ENCODE measurements at regions of chr3 and their contacts with region 1.

Region 1: DNA sequence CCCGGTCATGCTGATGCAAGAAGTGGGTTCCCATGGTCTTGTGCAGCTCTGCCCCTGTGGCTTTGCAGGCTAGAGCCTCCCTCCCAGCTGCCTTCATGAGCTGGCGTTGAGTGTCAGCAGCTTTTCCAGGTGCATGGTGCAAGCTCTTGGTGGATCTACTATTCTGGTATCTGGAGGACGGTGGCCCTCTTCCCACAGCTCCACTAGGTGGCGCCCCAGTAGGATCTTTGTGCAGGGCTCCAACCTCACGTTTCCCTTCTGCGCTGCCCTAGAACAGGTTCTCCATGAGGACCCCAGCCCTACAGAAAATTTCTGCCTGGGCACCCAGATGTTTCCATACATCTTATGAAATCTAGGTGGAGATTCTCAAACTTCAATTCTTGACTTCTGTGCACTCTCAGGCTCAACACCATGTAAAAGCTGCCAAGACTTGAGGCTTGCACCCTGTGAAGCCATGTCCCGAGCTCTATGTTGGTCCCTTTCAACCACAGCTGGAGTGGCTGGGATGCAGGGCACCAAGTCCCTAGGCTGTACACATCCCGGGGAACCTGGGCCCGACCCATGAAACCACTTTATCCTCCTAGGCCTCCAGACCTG is 238.4 kb upstream of the MDFIC2 start:
- DNase-seq: peak; percentile 72
- ATAC-seq: peak; percentile 45
- H3K4me3 ChIP-seq: no peak overlapping the region
- H3K4me3 Mint-ChIP-seq: no peak overlapping the region
- H3K27ac ChIP-seq: no peak overlapping the region
- H3K27ac Mint-ChIP-seq: no peak overlapping the region
- H3K4me1 ChIP-seq: no peaks in the 10 kb centered on the region
- H3K4me1 Mint-ChIP-seq: no peaks in the 10 kb centered on the region
- H3K27me3 ChIP-seq: no peaks in the 10 kb centered on the region
- H3K27me3 Mint-ChIP-seq: no peaks in the 10 kb centered on the region
- CTCF ChIP-seq: peak; percentile 76

Region 2: DNA sequence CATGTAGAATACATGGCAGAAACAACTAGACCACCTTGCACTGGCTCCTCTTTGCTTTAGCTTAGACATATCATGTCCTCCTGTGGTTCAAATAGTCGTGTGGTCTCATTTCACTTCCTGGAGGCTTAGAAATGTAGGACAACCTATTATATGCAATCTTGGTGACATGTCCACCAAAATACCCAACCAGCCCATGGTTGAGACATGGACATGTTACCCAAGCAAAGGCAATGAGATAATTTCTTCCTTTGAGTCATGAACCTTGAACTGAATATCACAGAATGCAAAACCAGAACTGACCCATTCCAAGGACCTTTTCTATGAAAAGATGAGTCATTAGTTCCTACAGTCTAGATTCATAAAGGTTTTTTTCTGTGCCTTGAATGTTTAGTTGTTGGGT is 70.6 kb after region 1 on chr3:
- CTCF ChIA-PET with region 1: no interaction called
- POLR2A ChIA-PET with region 1: no interaction called
- intact Hi-C with region 1: no loop called
- DNase-seq: no peak
- ATAC-seq: no peak
- H3K4me3 ChIP-seq: no peak overlapping the region
- H3K4me3 Mint-ChIP-seq: no peak overlapping the region
- H3K27ac ChIP-seq: no peak overlapping the region
- H3K27ac Mint-ChIP-seq: no peak overlapping the region
- H3K4me1 ChIP-seq: no peaks in the 10 kb centered on the region
- H3K4me1 Mint-ChIP-seq: no peaks in the 10 kb centered on the region
- H3K27me3 ChIP-seq: no peaks in the 10 kb centered on the region
- H3K27me3 Mint-ChIP-seq: peaks cover 21% of the 10 kb centered on the region
- CTCF ChIP-seq: no peak

Region 3: GRCh38 chr3:71069797-71070196 is 519.0 kb after region 1 on chr3:
- CTCF ChIA-PET with region 1: interaction called, 5 read pairs
- POLR2A ChIA-PET with region 1: no interaction called
- intact Hi-C with region 1: loop called (anchors 10 kb)
- DNase-seq: peak; percentile 83
- ATAC-seq: peak; percentile 48
- H3K4me3 ChIP-seq: no peak overlapping the region
- H3K4me3 Mint-ChIP-seq: peak overlapping the region; percentile 69
- H3K27ac ChIP-seq: peak overlapping the region; percentile 25 to 77
- H3K27ac Mint-ChIP-seq: peak overlapping the region; percentile 84
- H3K4me1 ChIP-seq: peaks cover 55 to 67% of the 10 kb centered on the region in 2 donors
- H3K4me1 Mint-ChIP-seq: peaks cover 79% of the 10 kb centered on the region
- H3K27me3 ChIP-seq: no peaks in the 10 kb centered on the region
- H3K27me3 Mint-ChIP-seq: no peaks in the 10 kb centered on the region
- CTCF ChIP-seq: peak; percentile 78

Region 4: GRCh38 chr3:71591101-71591500 is 1040.3 kb after region 1 on chr3:
- CTCF ChIA-PET with region 1: interaction called, 24 read pairs
- POLR2A ChIA-PET with region 1: no interaction called
- intact Hi-C with region 1: no loop called
- DNase-seq: no peak
- ATAC-seq: no peak
- H3K4me3 ChIP-seq: no peak overlapping the region
- H3K4me3 Mint-ChIP-seq: no peak overlapping the region
- H3K27ac ChIP-seq: no peak overlapping the region
- H3K27ac Mint-ChIP-seq: no peak overlapping the region
- H3K4me1 ChIP-seq: peaks cover 4 to 8% of the 10 kb centered on the region in 2 donors
- H3K4me1 Mint-ChIP-seq: peaks cover 9% of the 10 kb centered on the region
- H3K27me3 ChIP-seq: no peaks in the 10 kb centered on the region
- H3K27me3 Mint-ChIP-seq: peaks cover 9% of the 10 kb centered on the region
- CTCF ChIP-seq: no peak

Region 5: GRCh38 chr3:71657831-71658530 is 1107.2 kb after region 1 on chr3:
- CTCF ChIA-PET with region 1: interaction called, 58 read pairs
- POLR2A ChIA-PET with region 1: no interaction called
- intact Hi-C with region 1: no loop called
- DNase-seq: no peak
- ATAC-seq: no peak
- H3K4me3 ChIP-seq: no peak overlapping the region
- H3K4me3 Mint-ChIP-seq: no peak overlapping the region
- H3K27ac ChIP-seq: no peak overlapping the region
- H3K27ac Mint-ChIP-seq: no peak overlapping the region
- H3K4me1 ChIP-seq: no peaks in the 10 kb centered on the region
- H3K4me1 Mint-ChIP-seq: no peaks in the 10 kb centered on the region
- H3K27me3 ChIP-seq: no peaks in the 10 kb centered on the region
- H3K27me3 Mint-ChIP-seq: no peaks in the 10 kb centered on the region
- CTCF ChIP-seq: no peak

Measured in B cell (primary cell).